ENCODE measurements at regions of chr18 and their contacts with region 1.

Region 1: GRCh38 chr18:32851936-32852335 is 79.1 kb upstream of the KLHL14 start:
- DNase-seq: no peak
- CTCF ChIP-seq: no peak

Region 2: DNA sequence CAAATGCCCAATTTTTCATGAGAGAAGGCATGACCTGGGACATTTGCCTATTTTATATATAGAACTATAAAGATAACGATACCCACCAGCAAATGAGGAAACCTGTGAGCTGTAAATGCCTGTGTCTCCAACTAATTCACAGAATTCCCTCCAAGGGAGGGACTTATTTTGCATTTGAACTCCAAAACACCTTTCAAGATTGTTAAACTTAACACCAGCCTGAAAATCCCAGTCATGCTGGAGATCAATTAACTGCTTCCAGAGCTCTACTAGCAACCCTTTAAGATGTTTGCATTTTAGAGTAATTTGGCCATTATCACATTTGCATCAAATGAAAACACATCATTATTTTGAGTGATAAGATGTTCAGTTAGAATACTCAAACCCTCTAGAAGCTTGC is 11.0 kb before region 1 on chr18:
- CTCF ChIA-PET with region 1: interaction called, 11 read pairs
- POLR2A ChIA-PET with region 1: no interaction called
- DNase-seq: no peak
- CTCF ChIP-seq: no peak

Region 3: DNA sequence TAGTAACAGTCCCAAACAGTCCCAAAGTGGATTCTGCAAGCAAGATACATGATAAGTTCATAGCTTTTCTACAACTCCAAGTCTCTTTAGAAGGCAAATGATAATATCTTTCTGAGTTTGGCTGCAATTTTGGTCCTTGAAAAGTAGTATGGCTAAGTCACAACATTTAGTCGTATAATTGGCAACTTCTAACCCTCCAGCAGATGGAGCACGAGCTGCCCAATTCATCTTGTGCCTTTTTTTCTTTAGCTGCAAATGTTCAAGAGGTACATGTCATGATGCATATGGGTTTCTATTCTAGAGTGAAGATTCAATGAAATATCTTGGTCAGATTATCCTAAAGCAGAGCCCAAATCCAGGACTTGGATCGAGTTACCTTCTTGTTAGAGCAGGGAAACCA is 47.9 kb after region 1 on chr18:
- CTCF ChIA-PET with region 1: no interaction called
- POLR2A ChIA-PET with region 1: no interaction called
- DNase-seq: no peak
- CTCF ChIP-seq: no peak

Region 4: DNA sequence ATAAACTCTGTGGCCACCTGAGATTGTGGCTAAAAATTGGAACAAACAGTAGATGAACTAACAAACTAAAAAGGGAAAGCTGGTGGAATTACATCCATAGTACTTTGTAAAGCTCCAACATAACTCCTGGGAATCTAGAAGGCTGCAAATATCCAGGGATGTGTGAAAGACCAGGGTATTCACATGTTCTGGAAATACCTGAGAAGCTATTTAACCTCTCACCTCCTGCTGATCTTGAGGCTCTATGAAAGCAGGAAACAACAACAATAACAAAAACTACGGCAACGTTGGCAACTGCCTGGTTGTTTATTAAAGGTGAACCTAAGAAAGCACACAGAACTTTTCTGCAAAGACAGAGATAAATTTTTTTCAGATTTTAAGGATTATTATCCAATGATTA is 417.3 kb after region 1 on chr18:
- CTCF ChIA-PET with region 1: no interaction called
- POLR2A ChIA-PET with region 1: no interaction called
- DNase-seq: no peak
- CTCF ChIP-seq: no peak